ENCODE measurements at regions of chr17 and their contacts with region 1.

Region 1: GRCh38 chr17:10616502-10617119 is 40.5 kb downstream of the MYH3 start:
- DNase-seq: peak; percentile 63
- H3K4me3 Mint-ChIP-seq: no peak overlapping the region
- H3K27ac Mint-ChIP-seq: no peak overlapping the region
- H3K4me1 Mint-ChIP-seq: no peaks in the 10 kb centered on the region
- H3K27me3 Mint-ChIP-seq: no peaks in the 10 kb centered on the region

Region 2: DNA sequence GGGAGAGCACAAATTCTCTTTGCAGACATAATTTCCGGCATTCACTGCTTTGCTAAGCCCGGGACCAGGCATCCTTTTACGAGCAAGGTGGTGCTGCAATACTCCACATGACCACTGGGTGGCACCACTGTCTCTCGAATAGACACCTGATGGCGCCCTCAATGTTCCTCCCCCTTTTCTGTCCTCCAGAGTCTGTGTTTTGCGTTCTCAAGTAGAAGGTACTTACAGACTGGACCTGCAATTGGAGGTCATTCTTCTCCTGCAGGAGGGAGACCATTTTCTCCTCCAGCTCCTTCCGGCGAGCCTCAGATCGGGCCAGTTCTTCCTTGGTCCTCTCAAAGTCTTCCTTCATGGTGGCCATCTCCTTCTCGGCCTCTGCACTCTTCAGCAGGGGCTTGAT is 289.0 kb before region 1 on chr17:
- intact Hi-C with region 1: loop called (anchors 1 kb)
- DNase-seq: peak; percentile 55
- H3K4me3 Mint-ChIP-seq: no peak overlapping the region
- H3K27ac Mint-ChIP-seq: no peak overlapping the region
- H3K4me1 Mint-ChIP-seq: no peaks in the 10 kb centered on the region
- H3K27me3 Mint-ChIP-seq: no peaks in the 10 kb centered on the region

Region 3: GRCh38 chr17:10499950-10500349 is 116.7 kb before region 1 on chr17:
- intact Hi-C with region 1: no loop called
- DNase-seq: no peak
- H3K4me3 Mint-ChIP-seq: no peak overlapping the region
- H3K27ac Mint-ChIP-seq: no peak overlapping the region
- H3K4me1 Mint-ChIP-seq: no peaks in the 10 kb centered on the region
- H3K27me3 Mint-ChIP-seq: no peaks in the 10 kb centered on the region

Region 4: GRCh38 chr17:10646392-10646990 is 29.9 kb after region 1 on chr17:
- intact Hi-C with region 1: no loop called
- DNase-seq: peak; percentile 58
- H3K4me3 Mint-ChIP-seq: no peak overlapping the region
- H3K27ac Mint-ChIP-seq: no peak overlapping the region
- H3K4me1 Mint-ChIP-seq: no peaks in the 10 kb centered on the region
- H3K27me3 Mint-ChIP-seq: no peaks in the 10 kb centered on the region

Region 5: GRCh38 chr17:12522743-12523183 is 1906.2 kb after region 1 on chr17:
- intact Hi-C with region 1: no loop called
- DNase-seq: no peak
- H3K4me3 Mint-ChIP-seq: no peak overlapping the region
- H3K27ac Mint-ChIP-seq: no peak overlapping the region
- H3K4me1 Mint-ChIP-seq: no peaks in the 10 kb centered on the region
- H3K27me3 Mint-ChIP-seq: no peaks in the 10 kb centered on the region

Measured in activated T-helper 2 cell treated with anti-CD3 and anti-CD28 coated beads, Interferon-gamma antibody, Interleukin-2, Interleukin-4, amounts not matched to agents 10 μg/mL and 5 μg/mL and 100 μg/mL, durations not matched to agents 14 hours and 24 hours and 36 hours (primary cell).